HCT116 (cell line): ENCODE measurements at regions of chr16 and their contacts with region 1.

Region 1: GRCh38 chr16:54286090-54286993 is at the start of gene IRX3:
- DNase-seq: peak; percentile 66
- ATAC-seq: peak; percentile 90
- H3K4me3 ChIP-seq: peak within 1 kb of the TSS; percentile 56 to 71
- H3K27ac ChIP-seq: peak within 1 kb of the TSS; percentile 60; the same call in 1 of the 2 replicates
- H3K4me1 ChIP-seq: peaks cover 7 to 22% of the 10 kb centered on the region in 2 experiments
- H3K27me3 ChIP-seq: no peaks in the 10 kb centered on the region
- CTCF ChIP-seq: no peak
- POLR2A ChIP-seq: no peak
- RAD21 ChIP-seq: no peak
- total RNA-seq, gene IRX3: 2.0 TPM

Region 2: DNA sequence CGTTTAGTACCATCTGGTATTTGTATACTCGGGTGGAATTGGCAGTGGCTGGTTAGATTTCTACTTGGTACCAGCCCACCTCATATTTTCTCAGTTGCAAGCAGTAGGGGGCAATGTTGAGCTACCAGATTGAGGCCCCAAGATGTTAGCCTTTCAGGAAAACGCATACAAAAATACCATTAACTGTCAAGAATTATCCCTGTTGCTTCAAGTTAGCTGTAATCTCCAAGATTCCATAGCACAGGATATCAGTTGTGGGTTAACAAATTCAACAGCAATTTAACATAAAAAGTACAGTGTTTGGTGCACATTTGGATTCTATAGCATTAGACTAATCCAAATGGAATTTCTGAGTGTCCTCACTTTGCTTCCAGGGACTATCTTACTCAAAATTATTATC is 394.2 kb before region 1 on chr16:
- CTCF ChIA-PET with region 1: no interaction called
- POLR2A ChIA-PET with region 1: no interaction called
- RAD21 ChIA-PET with region 1: no interaction called
- intact Hi-C with region 1: loop called (anchors 10 kb)
- DNase-seq: peak; percentile 22
- ATAC-seq: peak; percentile 81
- H3K4me3 ChIP-seq: no peak overlapping the region
- H3K27ac ChIP-seq: no peak overlapping the region
- H3K4me1 ChIP-seq: no peaks in the 10 kb centered on the region
- H3K27me3 ChIP-seq: no peaks in the 10 kb centered on the region
- CTCF ChIP-seq: peak; percentile 21 to 79 (median 72); a peak in 5 of 6 replicates
- POLR2A ChIP-seq: no peak
- RAD21 ChIP-seq: peak; percentile 71

Region 3: DNA sequence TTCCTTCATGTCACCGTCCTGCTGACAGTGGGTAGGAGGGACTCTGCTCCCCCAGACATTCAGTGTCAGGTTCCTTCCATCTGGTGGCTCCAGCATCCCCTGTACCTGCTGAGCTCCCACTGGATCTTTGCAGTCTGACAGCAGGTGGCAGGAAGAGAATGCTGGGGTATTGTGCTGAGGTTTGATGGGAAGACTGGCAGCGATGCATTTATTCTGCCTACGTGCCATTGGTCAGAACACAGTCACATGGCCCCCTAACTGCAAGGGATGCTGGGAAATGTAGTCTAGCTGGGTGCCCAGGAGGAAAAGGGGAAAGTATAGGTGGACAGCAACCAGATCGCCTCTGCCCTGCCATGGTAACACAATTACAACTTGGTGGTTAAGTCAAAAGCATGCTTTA is 44.1 kb before region 1 on chr16:
- CTCF ChIA-PET with region 1: no interaction called
- POLR2A ChIA-PET with region 1: no interaction called
- RAD21 ChIA-PET with region 1: no interaction called
- intact Hi-C with region 1: no loop called
- DNase-seq: peak; percentile 41
- ATAC-seq: peak; percentile 88
- H3K4me3 ChIP-seq: no peak overlapping the region
- H3K27ac ChIP-seq: no peak overlapping the region
- H3K4me1 ChIP-seq: no peaks in the 10 kb centered on the region
- H3K27me3 ChIP-seq: 0 out of 2 replicates have a peak, but pooled peaks cover 4% of the 10 kb centered on the region
- CTCF ChIP-seq: 0 out of 6 replicates have a peak, but pooled peaks of 1 of the 3 experiments have one; percentile 11
- POLR2A ChIP-seq: no peak
- RAD21 ChIP-seq: peak; percentile 36; the same call in 1 of the 2 replicates

Region 4: GRCh38 chr16:54253118-54253517 is 33.2 kb before region 1 on chr16:
- CTCF ChIA-PET with region 1: no interaction called
- POLR2A ChIA-PET with region 1: no interaction called
- RAD21 ChIA-PET with region 1: no interaction called
- intact Hi-C with region 1: no loop called
- DNase-seq: no peak
- ATAC-seq: no peak
- H3K4me3 ChIP-seq: no peak overlapping the region
- H3K27ac ChIP-seq: no peak overlapping the region
- H3K4me1 ChIP-seq: no peaks in the 10 kb centered on the region
- H3K27me3 ChIP-seq: peaks cover 25% of the 10 kb centered on the region
- CTCF ChIP-seq: no peak
- POLR2A ChIP-seq: no peak
- RAD21 ChIP-seq: no peak

Region 5: GRCh38 chr16:54627616-54628015 is 341.3 kb after region 1 on chr16:
- CTCF ChIA-PET with region 1: no interaction called
- POLR2A ChIA-PET with region 1: no interaction called
- RAD21 ChIA-PET with region 1: no interaction called
- intact Hi-C with region 1: loop called (anchors 10 kb)
- DNase-seq: no peak
- ATAC-seq: no peak
- H3K4me3 ChIP-seq: no peak overlapping the region
- H3K27ac ChIP-seq: no peak overlapping the region
- H3K4me1 ChIP-seq: no peaks in the 10 kb centered on the region
- H3K27me3 ChIP-seq: no peaks in the 10 kb centered on the region
- CTCF ChIP-seq: no peak
- POLR2A ChIP-seq: no peak
- RAD21 ChIP-seq: no peak

Region 6: DNA sequence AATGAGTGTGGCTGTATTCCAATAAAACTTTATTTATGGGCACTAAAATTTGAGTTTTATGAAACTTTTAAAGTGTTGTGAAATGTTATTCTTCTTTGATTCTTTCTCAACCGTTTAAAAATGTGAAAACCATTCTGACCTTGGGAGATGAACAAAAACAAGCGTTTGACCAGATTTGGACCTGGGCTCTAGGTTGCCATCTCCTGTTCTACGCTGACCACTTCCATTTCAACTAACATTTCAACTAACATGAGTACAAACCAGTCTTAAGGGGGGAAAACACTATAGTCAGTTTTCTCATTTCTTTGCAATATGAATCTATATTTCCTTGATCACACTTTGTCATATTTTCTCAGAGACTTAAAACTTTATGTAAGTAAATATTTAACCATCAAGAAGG is 525.9 kb after region 1 on chr16:
- CTCF ChIA-PET with region 1: no interaction called
- POLR2A ChIA-PET with region 1: no interaction called
- RAD21 ChIA-PET with region 1: no interaction called
- intact Hi-C with region 1: loop called (anchors 5 kb)
- DNase-seq: no peak
- ATAC-seq: no peak
- H3K4me3 ChIP-seq: no peak overlapping the region
- H3K27ac ChIP-seq: no peak overlapping the region
- H3K4me1 ChIP-seq: no peaks in the 10 kb centered on the region
- H3K27me3 ChIP-seq: peaks cover 44% of the 10 kb centered on the region
- CTCF ChIP-seq: peak in 2 of 3 experiments; percentile 16 to 24; a peak in 1 of 6 replicates
- POLR2A ChIP-seq: no peak
- RAD21 ChIP-seq: peak; percentile 27; the same call in 1 of the 2 replicates

Region 7: GRCh38 chr16:55029509-55029908 is 743.2 kb after region 1 on chr16:
- CTCF ChIA-PET with region 1: no interaction called
- POLR2A ChIA-PET with region 1: no interaction called
- RAD21 ChIA-PET with region 1: no interaction called
- intact Hi-C with region 1: loop called (anchors 5 kb)
- DNase-seq: no peak
- ATAC-seq: no peak
- H3K4me3 ChIP-seq: no peak overlapping the region
- H3K27ac ChIP-seq: no peak overlapping the region
- H3K4me1 ChIP-seq: no peaks in the 10 kb centered on the region
- H3K27me3 ChIP-seq: no peaks in the 10 kb centered on the region
- CTCF ChIP-seq: no peak
- POLR2A ChIP-seq: no peak
- RAD21 ChIP-seq: no peak